Activated CD4-positive, alpha-beta T cell treated with anti-CD3 and anti-CD28 coated beads for 36 hours (primary cell): ENCODE measurements at regions of chr12 and their contacts with region 1.

Region 1: DNA sequence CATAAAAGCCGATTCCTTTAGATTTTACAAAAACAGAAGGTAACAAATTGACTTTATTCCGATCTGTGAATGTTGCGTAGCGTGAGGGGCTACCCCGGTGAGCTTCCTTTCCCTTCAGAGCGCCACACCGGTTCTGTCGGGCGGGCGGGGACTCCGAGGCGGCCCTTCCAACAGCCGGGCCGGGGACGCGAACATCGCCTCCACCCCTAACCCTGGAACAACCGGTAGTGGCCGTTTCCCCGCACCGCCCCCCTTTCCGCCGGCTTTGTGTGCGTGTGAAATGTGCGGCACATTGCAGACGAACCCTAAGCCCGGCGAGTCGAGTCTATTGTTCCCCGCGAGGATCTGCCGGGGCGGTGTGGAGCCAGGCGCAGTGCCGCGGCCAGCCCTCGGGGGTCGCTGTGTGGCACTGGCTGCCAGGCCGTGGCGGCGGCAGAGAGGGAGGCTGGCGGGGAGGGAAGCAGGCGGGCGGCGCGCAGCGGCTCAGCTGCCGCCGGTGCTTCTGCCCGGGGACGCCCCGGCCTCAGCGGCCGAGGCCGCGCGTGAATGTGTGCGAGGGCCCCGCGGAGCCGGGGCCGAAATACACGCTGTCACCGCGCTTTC is 775 bp upstream of the ARID2 start:
- DNase-seq: peak; percentile 97
- ATAC-seq: peak; percentile 73
- H3K4me3 Mint-ChIP-seq: peak overlapping the region; percentile 98
- H3K27ac Mint-ChIP-seq: peak overlapping the region; percentile 99
- H3K4me1 Mint-ChIP-seq: peaks cover 16% of the 10 kb centered on the region
- H3K27me3 Mint-ChIP-seq: no peaks in the 10 kb centered on the region

Region 2: DNA sequence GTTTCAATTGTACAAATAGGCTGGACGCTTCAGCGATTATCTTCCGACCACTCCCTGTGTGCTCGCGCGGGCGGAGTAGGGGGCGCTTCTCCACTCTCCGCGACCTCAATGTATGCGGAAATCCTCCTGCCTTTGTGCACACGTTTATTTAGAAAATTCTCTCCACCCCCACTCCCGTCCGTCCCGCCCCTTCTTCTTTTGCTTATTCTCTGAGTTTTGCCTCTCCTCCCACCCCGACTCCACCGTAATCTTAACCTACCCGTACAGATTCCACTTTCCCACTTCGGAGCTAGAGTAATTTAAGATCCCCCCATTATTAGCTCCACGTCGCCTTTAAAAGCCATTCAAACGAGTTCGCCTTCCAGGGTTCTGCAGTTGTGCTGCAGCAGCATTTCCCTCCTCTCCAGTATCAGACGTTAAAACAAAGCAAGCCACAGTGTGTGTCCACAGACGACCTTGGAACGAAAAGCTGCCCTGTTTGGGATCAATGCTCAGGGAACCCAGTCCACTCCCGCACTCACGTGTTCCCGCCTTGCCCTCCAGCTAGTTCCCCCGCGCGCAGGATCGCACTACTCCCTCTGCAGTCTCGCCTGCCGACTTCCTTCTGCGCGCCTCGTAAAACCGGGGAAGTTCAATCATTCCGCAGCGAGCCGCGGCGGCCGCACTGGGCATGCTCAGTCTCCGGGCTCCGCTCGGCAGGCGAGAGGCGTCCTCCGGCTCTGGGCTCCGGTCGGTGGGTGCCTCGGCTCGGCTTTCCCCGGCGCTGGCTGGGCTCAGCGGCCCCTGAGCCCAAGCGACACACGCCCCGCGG is 513.1 kb before region 1 on chr12 and contains the start of gene ANO6:
- CTCF ChIA-PET with region 1: interaction called, 3 read pairs
- POLR2A ChIA-PET with region 1: no interaction called
- intact Hi-C with region 1: loop called (anchors 1 to 5 kb)
- DNase-seq: peak; percentile 89
- ATAC-seq: peak; percentile 83
- H3K4me3 Mint-ChIP-seq: peak within 1 kb of the TSS; percentile 89
- H3K27ac Mint-ChIP-seq: peak within 1 kb of the TSS; percentile 90
- H3K4me1 Mint-ChIP-seq: peaks cover 39% of the 10 kb centered on the region
- H3K27me3 Mint-ChIP-seq: no peaks in the 10 kb centered on the region
- total RNA-seq, gene ANO6: 18.7 to 20.3 TPM

Region 3: GRCh38 chr12:45543906-45544315 is 184.8 kb before region 1 on chr12:
- CTCF ChIA-PET with region 1: interaction called, 58 read pairs
- POLR2A ChIA-PET with region 1: interaction called, 4 read pairs
- intact Hi-C with region 1: loop called (anchors 1 kb)
- DNase-seq: peak; percentile 65
- ATAC-seq: peak; percentile 97
- H3K4me3 Mint-ChIP-seq: no peak overlapping the region
- H3K27ac Mint-ChIP-seq: no peak overlapping the region
- H3K4me1 Mint-ChIP-seq: peaks cover 4% of the 10 kb centered on the region
- H3K27me3 Mint-ChIP-seq: peaks cover 4% of the 10 kb centered on the region

Region 4: DNA sequence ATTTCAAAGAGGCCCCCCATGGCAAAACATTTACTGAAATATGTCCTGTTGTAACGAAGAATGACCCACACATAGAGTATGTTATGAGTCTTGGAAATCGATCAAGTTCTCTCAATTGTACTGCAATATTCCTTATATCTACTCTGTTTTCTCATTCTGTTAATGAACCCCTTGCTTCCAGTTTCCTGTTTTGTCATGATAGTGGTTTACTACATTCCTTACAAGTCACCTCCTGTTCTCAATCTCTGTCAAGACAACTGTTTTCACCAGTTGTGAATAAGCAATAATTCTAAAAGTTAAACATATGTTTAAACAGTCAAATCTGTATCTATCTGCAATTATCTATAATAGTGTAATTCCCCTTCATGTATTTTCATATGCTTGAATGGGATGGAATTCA is 15.7 kb before region 1 on chr12:
- CTCF ChIA-PET with region 1: interaction called, 19 read pairs
- POLR2A ChIA-PET with region 1: no interaction called
- intact Hi-C with region 1: no loop called
- DNase-seq: no peak
- ATAC-seq: no peak
- H3K4me3 Mint-ChIP-seq: no peak overlapping the region
- H3K27ac Mint-ChIP-seq: no peak overlapping the region
- H3K4me1 Mint-ChIP-seq: peaks cover 9% of the 10 kb centered on the region
- H3K27me3 Mint-ChIP-seq: no peaks in the 10 kb centered on the region

Region 5: GRCh38 chr12:45881065-45881464 is 152.3 kb after region 1 on chr12:
- CTCF ChIA-PET with region 1: no interaction called
- POLR2A ChIA-PET with region 1: no interaction called
- intact Hi-C with region 1: no loop called
- DNase-seq: no peak
- ATAC-seq: no peak
- H3K4me3 Mint-ChIP-seq: no peak overlapping the region
- H3K27ac Mint-ChIP-seq: no peak overlapping the region
- H3K4me1 Mint-ChIP-seq: peaks cover 24% of the 10 kb centered on the region
- H3K27me3 Mint-ChIP-seq: no peaks in the 10 kb centered on the region

Region 6: GRCh38 chr12:45939759-45940158 is 211.0 kb after region 1 on chr12:
- CTCF ChIA-PET with region 1: no interaction called
- POLR2A ChIA-PET with region 1: no interaction called
- intact Hi-C with region 1: no loop called
- DNase-seq: no peak
- ATAC-seq: no peak
- H3K4me3 Mint-ChIP-seq: no peak overlapping the region
- H3K27ac Mint-ChIP-seq: no peak overlapping the region
- H3K4me1 Mint-ChIP-seq: peaks cover 10% of the 10 kb centered on the region
- H3K27me3 Mint-ChIP-seq: no peaks in the 10 kb centered on the region

Region 7: DNA sequence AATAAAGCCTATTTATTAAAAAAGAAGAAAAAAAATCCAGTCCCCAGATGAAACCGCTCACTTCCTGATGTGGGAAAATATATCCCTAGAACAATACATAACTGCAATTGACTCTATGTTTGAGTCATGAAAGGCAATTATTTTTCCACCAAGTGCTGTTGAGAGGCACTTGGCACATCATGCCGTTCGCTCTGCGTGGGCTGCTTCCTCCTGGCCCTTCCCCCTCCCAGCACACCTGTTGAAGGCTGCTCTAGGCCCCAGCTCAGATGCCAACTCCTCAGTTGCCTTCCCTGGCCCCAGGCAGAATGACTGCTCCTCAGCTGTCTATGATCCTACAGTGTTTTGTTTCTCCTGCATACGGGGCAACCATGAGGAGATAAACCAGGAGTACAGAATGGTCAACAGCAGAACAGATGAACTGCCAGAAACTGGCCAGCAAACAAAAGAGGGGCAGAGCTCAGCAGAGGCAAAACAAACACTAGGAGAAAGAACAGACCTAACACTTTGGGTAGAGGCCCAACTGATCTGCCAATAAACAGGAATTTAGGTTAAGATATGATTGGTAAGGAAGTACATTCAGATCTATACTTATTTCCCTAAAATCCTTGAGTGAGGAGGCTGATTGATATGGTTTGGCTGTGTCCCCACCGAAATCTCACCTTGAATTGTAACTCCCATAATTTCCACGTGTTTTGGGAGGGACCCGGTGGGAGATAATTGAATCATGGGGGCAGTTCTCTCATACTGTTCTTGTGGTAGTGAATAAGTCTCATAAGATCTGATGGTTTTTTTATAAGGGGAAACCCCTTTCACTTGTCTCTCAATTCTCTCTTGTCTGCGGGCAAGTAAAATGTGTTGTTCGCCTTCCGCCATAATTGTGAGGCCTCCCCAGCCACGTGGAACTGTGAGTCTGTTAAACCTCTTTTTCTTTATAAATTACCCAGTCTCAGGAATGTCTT is 481.5 kb after region 1 on chr12:
- CTCF ChIA-PET with region 1: interaction called, 3 read pairs
- POLR2A ChIA-PET with region 1: no interaction called
- intact Hi-C with region 1: loop called (anchors 5 to 10 kb)
- DNase-seq: peak; percentile 88
- ATAC-seq: peak; percentile 71
- H3K4me3 Mint-ChIP-seq: peak overlapping the region; percentile 58
- H3K27ac Mint-ChIP-seq: peak overlapping the region; percentile 97
- H3K4me1 Mint-ChIP-seq: peaks cover 79% of the 10 kb centered on the region
- H3K27me3 Mint-ChIP-seq: no peaks in the 10 kb centered on the region

Region 8: GRCh38 chr12:46268590-46269558 is 540.1 kb after region 1 on chr12 and contains the start of gene SLC38A1:
- CTCF ChIA-PET with region 1: interaction called, 3 read pairs
- POLR2A ChIA-PET with region 1: interaction called, 3 read pairs
- intact Hi-C with region 1: loop called (anchors 2 to 5 kb)
- DNase-seq: peak; percentile 94
- ATAC-seq: peak; percentile 61
- H3K4me3 Mint-ChIP-seq: no peak within 1 kb of the TSS
- H3K27ac Mint-ChIP-seq: no peak within 1 kb of the TSS
- H3K4me1 Mint-ChIP-seq: peaks cover 30% of the 10 kb centered on the region
- H3K27me3 Mint-ChIP-seq: no peaks in the 10 kb centered on the region
- total RNA-seq, gene SLC38A1: 167 to 180 TPM

Region 9: GRCh38 chr12:47216150-47216677 is 1487.5 kb after region 1 on chr12:
- CTCF ChIA-PET with region 1: no interaction called
- POLR2A ChIA-PET with region 1: no interaction called
- intact Hi-C with region 1: loop called (anchors 10 kb)
- DNase-seq: peak; percentile 81
- ATAC-seq: peak; percentile 43
- H3K4me3 Mint-ChIP-seq: peak overlapping the region; percentile 89
- H3K27ac Mint-ChIP-seq: peak overlapping the region; percentile 96
- H3K4me1 Mint-ChIP-seq: peaks cover 38% of the 10 kb centered on the region
- H3K27me3 Mint-ChIP-seq: no peaks in the 10 kb centered on the region